ENCODE measurements at regions of chr6 and their contacts with region 1.

Region 1: DNA sequence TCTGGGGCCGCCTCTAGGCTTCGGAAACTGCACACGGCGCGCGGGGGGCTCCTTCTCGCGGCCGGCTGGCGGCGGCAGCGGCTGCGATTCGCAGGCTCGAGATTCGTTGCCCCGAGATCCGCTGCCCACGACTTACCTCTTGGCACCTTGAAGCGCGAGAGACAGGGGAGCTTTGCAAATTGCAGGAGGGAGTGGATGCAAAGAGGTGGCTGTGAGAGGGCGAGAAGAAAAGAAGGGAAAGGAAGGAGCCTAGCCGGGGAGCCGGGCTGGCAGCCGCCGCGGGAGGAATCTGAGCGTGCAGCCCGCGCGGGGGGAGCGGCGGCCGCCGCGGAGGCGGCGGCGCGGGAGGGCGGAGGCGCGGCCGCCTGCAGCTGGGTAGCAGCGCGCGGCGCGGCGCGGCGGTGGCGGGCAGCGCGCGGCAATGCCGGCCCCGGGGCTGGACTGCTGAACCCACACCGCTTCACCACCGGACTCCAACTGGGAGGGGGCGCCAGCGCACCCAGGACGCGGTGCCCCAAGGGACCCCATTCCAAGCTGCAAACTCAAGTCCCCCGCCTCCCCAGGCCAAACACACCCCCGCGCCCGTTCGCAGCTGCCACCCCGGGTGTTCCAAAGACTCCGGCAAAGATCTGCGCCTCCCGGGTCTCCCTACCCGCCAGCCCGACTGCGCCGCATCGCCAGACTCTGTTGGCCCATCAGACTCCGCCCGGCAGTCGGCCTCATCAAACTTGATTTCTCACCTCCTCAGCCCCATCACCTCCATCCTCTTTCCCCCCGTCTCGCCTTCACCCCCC is 44.2 kb upstream of the SUPT3H start:
- DNase-seq: peak; percentile 84
- ATAC-seq: peak; percentile 58

Region 2: DNA sequence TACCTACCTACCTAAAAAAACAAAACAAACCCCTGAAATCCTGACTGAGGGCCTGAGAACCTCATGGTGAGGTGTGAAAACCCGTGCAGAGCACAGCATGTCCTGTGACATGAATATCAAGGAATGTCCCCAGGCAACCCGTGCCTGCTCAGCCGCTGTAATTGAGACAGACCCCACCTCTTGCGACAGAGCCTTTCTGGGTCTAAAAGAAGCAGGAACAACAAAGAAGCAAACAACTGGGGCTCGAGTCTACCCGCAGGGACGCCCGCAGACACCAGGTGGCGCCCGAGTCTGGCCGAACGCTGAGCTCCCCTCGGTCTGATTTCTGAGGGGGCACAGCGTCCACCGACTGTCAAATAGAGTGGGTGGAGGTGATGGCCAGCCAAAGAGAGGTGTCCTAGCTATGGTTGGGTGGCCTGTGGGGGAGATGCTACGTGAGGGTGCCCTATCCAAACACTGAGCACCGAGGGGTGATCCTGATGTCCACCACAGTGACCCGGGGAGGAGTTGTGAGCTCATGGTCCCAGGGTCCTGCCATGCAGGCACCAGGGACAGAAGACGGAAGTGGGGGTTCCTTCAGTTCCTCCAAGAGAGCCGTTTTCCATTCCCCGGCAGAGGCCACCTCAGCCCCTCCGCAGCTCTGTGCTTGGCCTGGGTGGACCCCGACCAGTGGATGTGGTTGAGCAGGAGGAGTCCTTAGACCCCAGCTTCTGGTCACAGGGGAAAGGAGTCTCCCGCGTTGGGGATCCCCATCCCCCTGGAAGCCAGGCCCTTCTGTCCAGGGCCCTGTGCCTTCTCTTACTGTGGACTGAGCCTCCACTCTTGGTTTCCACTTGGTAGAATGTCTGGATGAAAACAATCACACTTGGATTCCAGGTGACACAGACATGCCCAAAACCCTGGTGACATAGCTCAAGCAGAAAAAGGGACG is 766.2 kb before region 1 on chr6:
- intact Hi-C with region 1: loop called (anchors 5 kb)
- DNase-seq: peak; percentile 75
- ATAC-seq: peak; percentile 72

Region 3: DNA sequence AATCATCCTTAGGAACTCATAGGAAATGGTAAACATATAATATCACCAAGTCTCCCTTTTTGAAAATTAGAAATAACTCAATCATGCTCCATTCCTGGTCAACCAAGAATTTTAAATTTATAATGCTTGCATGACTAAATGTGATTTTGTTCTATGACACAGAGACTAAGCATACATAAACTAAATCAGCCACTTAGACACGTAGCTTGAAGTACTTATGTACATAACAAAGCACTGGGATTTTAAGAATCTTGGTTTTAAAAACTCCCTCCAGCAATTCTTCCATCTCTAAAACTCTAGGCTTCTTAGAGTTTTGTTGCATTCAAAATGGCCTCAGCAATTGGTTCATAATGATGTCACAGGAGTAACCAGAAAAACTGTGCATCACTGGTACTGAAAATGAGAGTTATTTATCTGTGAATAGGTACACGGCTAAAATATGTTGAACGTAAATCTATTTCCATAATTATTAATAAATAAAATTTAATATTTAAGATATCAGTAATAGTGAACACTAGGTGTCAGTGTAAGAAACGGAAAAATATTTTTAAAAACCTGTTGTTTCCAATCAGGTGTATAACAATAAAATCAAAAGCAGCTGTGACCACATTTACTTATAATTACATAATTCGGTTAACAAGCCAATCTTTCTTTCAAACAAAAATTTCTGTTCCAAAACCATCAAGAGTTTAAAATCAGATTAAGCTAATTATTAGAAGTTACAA is 335.4 kb before region 1 on chr6:
- intact Hi-C with region 1: loop called (anchors 5 kb)
- DNase-seq: no peak
- ATAC-seq: no peak

Region 4: DNA sequence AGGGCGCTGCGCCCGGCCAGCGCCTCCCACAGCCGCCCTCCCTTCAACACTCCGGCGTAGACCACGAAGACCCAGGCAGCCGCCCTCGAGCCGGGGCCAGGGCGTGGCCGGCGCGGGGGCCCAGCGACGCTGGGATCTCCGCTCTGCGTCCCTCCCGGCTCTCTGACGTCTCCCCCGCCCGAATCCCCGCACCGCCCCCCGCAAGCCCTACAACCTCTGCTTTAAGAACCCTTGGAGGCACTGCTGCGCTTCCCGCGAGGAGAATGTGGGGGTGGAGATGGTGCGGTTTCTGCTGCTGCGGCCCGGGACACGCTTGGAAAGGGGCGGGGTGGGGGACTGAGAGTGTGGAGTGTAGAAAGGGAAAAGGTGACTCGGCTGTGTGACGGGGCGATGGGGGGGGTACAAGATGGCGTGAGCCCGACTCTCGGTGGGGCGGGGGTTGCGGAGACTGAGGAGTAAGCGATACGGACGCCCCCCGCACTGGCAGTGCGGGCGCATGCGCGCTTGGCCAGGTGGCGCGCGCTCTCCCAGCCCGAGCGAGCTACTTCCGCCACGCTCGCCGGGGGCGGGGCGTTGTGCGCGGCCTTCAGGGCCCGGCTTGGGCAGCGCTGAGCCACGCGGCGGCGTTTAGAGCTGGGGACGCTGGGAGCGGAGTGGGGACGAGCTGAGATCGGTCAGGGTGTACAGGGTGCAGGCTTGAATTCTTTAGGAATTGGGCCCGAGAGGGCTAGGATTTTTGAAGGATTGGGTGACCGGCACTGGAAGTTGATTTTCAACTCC is 44.2 kb before region 1 on chr6 and contains the start of gene SUPT3H:
- intact Hi-C with region 1: loop called (anchors 5 kb)
- DNase-seq: peak; percentile 97
- ATAC-seq: peak; percentile 99
- total RNA-seq, gene SUPT3H: 3.2 TPM

Region 5: GRCh38 chr6:45714741-45715507 is 293.0 kb after region 1 on chr6:
- intact Hi-C with region 1: loop called (anchors 2 kb)
- DNase-seq: no peak
- ATAC-seq: peak; percentile 91

Region 6: DNA sequence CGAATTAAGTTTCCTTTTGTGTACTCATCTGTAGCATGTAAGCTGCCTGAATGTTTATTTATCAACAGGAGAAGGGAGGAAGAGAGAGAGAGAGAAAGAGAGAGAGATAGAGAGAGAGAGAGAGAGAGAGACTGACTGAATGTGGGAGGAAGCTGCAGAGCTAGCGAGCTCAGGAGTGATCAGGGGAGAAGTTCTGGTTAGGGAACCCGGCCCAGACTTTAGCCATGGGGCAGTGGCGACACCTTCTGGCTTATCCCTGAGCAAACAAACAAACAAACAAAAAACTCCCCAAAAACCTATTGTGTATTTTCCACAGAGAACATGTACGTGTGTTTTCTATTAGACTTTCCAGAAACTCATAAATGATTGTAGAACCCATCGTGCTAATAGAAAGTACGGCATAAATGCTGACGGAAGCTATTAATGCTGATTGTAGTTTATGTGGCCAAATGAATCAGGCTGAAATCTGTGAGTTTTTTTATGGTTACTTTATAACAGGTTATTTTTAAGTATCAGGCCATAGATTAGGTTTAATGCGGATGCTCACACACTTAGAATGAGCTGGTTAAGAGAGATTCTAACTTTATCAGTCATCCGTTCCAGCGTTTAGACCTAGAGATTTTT is 500.9 kb after region 1 on chr6:
- intact Hi-C with region 1: loop called (anchors 5 kb)
- DNase-seq: no peak
- ATAC-seq: peak; percentile 81

Measured in Right ventricle myocardium inferior (tissue), 1 donor.